ENCODE measurements at regions of chr11 and their contacts with region 1.

Region 1: DNA sequence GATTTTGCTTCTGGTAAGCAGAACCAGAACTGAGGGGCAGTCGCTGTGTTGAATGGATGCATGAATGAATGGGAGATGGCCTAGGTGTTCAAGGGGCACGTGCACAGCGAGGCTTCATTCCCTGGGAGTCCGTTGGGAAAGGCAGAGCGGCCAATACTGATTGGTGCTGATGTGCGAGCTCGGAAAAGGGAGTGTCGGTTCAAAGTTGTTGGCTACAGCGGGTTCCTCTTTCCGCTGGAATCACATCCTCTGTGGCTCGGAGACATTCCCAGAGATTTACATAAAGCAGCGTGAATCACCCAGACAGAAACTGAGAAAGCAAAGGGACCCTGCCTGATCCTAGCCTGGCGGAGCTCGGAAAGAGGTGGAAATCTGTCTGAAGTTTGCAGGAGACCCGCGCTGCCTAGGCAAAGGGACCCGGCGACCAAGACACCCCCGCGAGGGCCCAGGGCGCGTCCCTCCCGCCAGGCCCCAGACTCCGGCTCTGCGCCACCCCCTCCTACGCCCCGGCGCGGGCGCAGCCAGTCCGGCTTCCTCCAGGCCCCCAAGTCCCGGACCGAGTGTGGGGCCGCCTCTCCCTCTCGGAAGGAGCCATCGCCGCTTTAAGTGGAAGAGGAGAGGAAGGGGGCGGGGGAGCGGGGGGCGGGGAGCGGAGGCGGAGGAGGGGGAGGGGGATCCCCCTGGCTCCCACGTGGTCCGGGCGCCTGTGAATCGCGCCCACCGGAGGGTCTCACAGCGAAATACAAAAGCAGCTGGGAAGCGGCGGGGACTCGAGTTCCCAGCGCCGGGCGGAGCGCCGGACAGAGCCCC is at the start of gene FJX1:
- DNase-seq: peak; percentile 66
- ATAC-seq: peak; percentile 73
- total RNA-seq, gene FJX1: 0.65 TPM

Region 2: DNA sequence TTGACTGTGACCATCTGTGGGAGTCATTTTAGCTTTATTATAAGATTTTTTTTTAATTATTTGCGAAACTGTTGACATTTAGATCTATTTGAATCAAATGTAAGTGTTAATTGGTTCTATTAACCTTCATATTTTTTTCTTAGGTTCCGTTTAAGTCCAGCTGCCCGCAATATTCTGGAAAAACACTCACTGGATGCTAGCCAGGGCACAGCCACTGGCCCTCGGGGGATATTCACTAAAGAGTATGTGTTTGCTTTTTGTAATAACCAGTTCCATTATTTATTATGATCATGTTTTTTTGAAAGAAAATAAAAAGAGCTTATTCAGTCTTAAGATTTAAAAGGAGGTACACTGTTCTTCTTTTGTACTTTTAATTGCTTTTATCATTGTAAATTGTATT is 657.6 kb before region 1 on chr11:
- intact Hi-C with region 1: no loop called
- DNase-seq: peak; percentile 61
- ATAC-seq: peak; percentile 59

Region 3: GRCh38 chr11:35182317-35182939 is 435.5 kb before region 1 on chr11:
- intact Hi-C with region 1: no loop called
- DNase-seq: no peak
- ATAC-seq: no peak

Region 4: GRCh38 chr11:35541621-35542375 is 76.1 kb before region 1 on chr11:
- intact Hi-C with region 1: no loop called
- DNase-seq: peak; percentile 43
- ATAC-seq: peak; percentile 79

Region 5: DNA sequence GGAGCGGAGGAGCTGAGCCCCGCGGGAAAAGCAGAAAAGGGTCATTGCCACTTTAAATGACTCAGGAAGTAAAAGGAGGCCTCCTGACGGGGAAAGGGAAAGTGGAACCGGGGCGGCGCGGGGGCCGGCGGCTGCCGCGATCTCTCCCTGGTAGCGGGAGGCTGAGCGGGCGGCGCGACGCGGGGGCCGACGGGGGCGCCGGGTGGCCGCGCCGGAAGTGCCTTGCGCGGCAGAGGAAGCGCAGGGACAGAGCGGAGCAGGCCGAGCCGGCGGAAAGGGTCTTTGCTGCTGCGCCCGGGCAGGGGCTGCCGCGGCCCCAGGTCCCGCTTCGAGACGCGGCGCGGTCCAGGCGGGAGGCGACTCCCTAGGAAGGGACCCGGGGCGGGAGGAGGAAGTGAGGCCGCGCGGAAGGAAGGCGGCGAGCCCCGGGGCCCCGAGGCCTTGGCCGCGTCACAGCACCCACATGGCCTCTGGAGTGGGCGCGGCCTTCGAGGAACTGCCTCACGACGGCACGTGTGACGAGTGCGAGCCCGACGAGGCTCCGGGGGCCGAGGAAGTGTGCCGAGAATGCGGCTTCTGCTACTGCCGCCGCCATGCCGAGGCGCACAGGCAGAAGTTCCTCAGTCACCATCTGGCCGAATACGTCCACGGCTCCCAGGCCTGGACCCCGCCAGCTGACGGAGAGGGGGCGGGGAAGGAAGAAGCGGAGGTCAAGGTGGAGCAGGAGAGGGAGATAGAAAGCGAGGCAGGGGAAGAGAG is 44.9 kb after region 1 on chr11 and contains the start of gene TRIM44:
- intact Hi-C with region 1: loop called (anchors 5 kb)
- DNase-seq: peak; percentile 90
- ATAC-seq: peak; percentile 98
- total RNA-seq, gene TRIM44: 34.0 TPM

Region 6: DNA sequence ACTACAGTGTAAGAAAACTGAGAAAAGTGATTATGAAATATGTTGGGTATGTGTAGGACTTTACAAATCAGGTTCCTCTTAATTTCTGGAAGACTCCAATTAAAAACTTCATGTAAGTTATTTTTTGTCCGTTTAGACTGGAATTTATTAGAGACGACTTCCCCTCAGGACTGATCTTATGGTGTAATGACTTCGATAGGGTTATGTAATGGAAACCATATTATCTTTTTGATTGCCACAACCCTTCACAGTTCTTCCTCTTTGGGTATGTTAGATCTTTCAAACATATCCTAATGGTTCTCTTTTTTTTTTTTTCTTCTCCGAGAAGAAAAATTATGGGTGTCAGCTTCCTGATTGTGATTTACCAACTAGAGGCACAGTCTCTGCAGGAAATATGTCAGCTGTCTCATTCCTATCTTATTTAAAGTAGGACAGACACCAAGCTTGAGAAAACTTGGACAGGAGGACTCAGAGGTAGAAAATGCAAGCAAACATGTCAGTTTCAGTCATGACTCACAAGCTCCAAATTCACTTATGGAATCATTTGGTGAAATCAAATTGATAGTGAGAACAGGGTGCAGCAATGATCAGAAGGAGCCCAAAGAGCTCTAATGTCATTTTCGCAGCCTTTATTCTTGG is 314.9 kb after region 1 on chr11:
- intact Hi-C with region 1: loop called (anchors 10 kb)
- DNase-seq: no peak
- ATAC-seq: peak; percentile 70

Region 7: DNA sequence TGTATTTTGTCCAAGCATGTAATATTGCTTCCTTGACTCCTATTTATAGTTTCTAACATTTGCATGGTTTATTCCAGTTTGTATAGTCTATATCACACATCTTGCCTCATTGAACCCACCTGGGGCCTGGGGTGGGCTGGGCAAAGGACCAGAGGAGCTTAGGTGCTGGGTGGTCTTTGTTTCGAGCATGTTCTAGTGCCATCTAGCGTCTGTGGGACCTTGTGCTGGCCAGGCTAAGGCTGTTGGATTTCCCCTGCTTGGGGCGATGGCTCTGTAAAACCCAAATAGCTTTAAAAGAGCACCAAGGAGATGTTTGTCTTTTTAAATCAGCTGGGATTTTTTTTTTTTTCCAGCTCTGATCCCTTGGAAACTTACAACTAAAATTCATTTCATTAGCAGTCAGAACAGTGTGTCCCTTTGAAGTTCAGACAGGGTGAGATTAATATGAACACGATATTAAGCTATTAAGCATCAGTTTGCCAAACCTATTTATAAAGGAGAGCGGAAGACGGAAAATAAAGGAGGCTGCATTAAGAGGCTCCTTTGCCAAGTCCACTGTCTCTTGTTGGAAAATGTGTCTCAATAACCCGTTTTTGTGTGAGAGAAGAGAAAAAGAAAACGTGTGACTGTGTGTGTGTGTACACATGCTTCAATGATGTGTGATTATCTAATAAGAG is 514.0 kb after region 1 on chr11:
- intact Hi-C with region 1: loop called (anchors 5 kb)
- DNase-seq: peak; percentile 58
- ATAC-seq: peak; percentile 87

Region 8: GRCh38 chr11:36478700-36479329 is 860.9 kb after region 1 on chr11:
- intact Hi-C with region 1: loop called (anchors 10 kb)
- DNase-seq: no peak
- ATAC-seq: peak; percentile 77

Measured in Right ventricle myocardium superior (tissue), 1 donor.